ENCODE measurements at regions of chr4 and their contacts with region 1.

Region 1: GRCh38 chr4:118280501-118281218 is 72.1 kb downstream of the PRSS12 start:
- DNase-seq: peak; percentile 71
- H3K4me3 ChIP-seq: peak overlapping the region; percentile 76 to 81
- H3K27ac ChIP-seq: peak overlapping the region; percentile 16 to 93
- H3K4me1 ChIP-seq: peaks cover 6% of the 10 kb centered on the region
- H3K27me3 ChIP-seq: no peaks in the 10 kb centered on the region
- CTCF ChIP-seq: peak in 3 of 4 experiments; percentile 33 to 63 (median 60)
- POLR2A ChIP-seq: no peak

Region 2: GRCh38 chr4:118352843-118353533 is 72.3 kb after region 1 on chr4 and contains the start of gene PRSS12:
- intact Hi-C with region 1: loop called (anchors 2 kb)
- DNase-seq: peak; percentile 30
- H3K4me3 ChIP-seq: peak within 1 kb of the TSS; percentile 38 to 43
- H3K27ac ChIP-seq: no peak within 1 kb of the TSS
- H3K4me1 ChIP-seq: peaks cover 4% of the 10 kb centered on the region
- H3K27me3 ChIP-seq: no peaks in the 10 kb centered on the region
- CTCF ChIP-seq: peak; percentile 46 to 83 (median 66)
- POLR2A ChIP-seq: no peak
- total RNA-seq, gene PRSS12: 1.7 to 43.0 TPM

Measured in prostate gland (tissue), 2 donors.